MCF 10A (cell line): ENCODE measurements at regions of chr1 and their contacts with region 1.

Region 1: DNA sequence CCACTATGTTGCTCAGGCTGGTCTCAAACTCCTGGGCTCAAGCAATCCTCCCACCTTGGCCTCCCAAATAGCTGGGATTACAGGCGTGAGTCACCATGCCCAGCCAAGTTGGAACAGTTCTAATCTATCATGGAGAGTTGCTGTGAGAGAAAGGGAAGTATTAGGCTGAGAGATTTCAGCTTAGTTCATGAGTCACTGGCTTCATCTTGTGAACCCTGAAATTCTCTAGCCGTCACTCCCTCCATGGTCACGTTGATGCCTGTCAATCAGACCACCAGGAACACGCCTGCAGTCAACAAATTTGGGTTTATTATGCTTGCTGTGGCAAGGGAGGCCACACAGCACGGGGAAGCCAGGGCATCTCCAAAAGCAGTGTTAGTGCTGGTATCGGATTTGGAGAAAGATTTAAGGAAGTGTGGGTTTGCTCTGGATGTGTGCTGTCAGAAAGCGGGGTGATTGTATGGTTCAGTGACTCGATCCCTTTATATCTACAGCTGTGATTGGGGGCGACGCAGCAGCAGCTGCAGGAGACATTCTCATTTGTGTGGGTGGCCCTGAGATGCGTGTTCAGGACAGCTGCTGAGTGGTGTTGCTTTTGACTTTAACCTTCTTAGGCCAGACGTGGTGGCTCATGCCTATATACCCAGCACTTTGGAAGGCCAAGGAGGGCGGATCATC is 18.7 kb downstream of the UQCRHL start:
- DNase-seq: peak; percentile 76
- H3K4me3 Mint-ChIP-seq: no peak overlapping the region
- H3K27ac Mint-ChIP-seq: peak overlapping the region; percentile 76
- H3K4me1 Mint-ChIP-seq: peaks cover 26% of the 10 kb centered on the region
- H3K27me3 Mint-ChIP-seq: no peaks in the 10 kb centered on the region
- CTCF ChIP-seq: no peak

Region 2: DNA sequence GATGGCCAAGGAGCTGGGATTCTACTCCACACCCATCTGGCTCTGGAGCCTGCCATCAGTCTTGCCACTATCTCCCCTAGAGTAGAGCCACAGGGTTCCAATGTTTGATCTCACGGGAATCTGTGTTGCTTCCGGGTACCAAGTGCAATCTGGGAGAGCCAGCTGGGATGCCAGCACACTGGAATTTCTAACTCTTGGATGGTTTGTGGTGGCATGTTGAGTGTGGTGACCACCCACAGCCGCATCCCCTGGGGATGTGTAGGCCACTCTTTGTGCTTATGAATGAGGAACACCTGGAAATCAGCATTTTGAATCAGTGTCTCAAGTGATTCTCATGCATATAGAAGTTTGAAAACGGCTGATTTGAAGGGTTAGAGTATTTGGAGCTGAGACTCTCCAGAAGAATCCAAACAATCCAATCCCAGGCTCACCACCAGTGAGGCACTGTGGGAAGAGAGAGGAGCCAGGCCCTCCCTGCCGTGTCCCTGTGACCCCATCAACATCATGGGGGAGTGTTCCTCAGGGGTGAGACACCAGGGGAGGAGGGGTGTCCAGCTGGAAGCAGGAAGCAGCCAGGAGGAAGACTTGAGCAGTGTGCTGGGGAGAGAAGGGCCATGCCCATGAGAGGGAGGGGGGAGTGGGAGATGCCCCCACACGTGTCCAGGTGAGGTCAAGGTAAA is 16.8 kb before region 1 on chr1:
- CTCF ChIA-PET with region 1: interaction called, 8 read pairs
- POLR2A ChIA-PET with region 1: interaction called, 14 read pairs
- intact Hi-C with region 1: no loop called
- DNase-seq: no peak
- H3K4me3 Mint-ChIP-seq: no peak overlapping the region
- H3K27ac Mint-ChIP-seq: peak overlapping the region; percentile 42
- H3K4me1 Mint-ChIP-seq: no peaks in the 10 kb centered on the region
- H3K27me3 Mint-ChIP-seq: no peaks in the 10 kb centered on the region
- CTCF ChIP-seq: no peak

Region 3: GRCh38 chr1:15949453-15950245 is 160.9 kb after region 1 on chr1:
- CTCF ChIA-PET with region 1: interaction called, 8 read pairs
- POLR2A ChIA-PET with region 1: no interaction called
- intact Hi-C with region 1: loop called (anchors 2 kb)
- DNase-seq: peak; percentile 95
- H3K4me3 Mint-ChIP-seq: peak overlapping the region; percentile 47
- H3K27ac Mint-ChIP-seq: peak overlapping the region; percentile 87
- H3K4me1 Mint-ChIP-seq: peaks cover 59% of the 10 kb centered on the region
- H3K27me3 Mint-ChIP-seq: no peaks in the 10 kb centered on the region
- CTCF ChIP-seq: no peak

Region 4: DNA sequence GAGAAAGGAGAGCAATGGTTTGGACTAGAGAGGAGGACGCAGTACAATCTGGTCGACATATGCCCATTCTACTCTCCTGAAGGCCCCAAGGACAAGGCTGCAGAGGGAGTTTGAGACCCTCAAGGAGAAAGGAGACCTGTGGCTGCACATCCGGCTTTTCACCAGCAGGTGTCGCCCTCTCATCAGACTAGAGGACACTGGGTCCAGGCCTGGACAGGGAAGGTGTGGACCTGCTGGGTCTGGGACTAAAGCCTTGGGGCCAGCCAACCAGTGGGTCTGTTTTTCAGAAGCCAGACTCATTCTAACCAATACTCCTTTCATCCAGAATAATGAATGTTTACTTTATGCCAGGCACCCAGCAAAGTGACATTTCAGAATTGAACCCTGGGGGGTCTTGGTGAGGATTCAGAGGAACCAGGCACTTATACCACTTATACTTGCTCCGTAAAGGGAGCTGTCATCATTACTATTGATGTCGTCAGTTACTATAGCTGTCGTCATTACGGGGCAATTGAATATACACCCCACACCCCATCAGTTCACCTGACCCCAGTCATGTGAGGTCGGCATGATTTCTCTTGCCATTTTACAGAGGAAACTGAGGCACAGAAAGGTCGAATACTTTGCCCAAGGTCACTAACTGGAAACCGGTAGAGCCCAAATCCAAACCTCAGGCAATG is 220.4 kb after region 1 on chr1:
- CTCF ChIA-PET with region 1: interaction called, 23 read pairs
- POLR2A ChIA-PET with region 1: no interaction called
- intact Hi-C with region 1: loop called (anchors 2 kb)
- DNase-seq: peak; percentile 81
- H3K4me3 Mint-ChIP-seq: no peak overlapping the region
- H3K27ac Mint-ChIP-seq: no peak overlapping the region
- H3K4me1 Mint-ChIP-seq: peaks cover 15% of the 10 kb centered on the region
- H3K27me3 Mint-ChIP-seq: no peaks in the 10 kb centered on the region
- CTCF ChIP-seq: peak; percentile 97

Region 5: DNA sequence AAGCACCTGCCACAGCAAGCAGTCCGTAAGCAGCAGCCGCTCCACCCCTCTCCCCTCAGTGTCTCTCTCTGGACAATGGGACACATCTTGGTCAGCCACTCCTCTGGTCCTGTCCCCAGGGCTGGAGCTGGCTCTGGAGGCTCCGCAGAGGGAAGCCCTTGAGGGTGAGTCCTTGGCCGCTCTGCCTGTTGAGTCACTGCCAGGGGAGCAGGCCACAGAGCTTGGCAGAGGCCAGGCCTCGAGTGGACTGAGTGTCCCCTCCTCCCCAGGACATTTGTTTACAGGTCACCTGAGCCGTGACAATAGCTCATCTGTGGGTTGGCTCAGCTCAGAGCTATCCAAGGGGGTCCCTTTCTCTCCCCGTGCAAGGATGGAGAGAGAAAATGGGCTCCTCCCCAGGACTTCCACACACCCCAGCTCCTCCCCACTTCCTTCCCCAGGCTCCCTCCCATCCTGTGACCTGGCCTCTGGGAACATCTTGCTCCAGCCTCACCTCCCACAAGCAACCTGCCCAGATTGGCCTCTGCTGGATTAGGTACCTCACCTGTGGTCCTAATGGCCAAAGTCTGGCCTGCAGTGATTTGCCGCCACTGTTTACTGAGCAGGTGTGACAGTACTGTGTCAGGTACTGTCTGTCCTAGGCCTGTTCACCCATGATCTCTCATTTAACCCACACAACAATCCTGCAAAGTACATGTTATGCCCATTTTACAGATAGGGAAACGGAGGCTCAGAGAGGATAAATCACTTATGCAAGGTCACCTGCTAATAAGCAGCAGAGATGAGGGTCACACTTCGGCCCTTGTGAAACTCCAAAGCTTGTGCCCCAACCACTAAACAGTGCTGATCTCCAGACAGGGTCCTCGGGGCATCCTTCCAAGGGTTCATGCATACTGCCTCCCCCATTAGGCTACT is 279.9 kb after region 1 on chr1:
- CTCF ChIA-PET with region 1: no interaction called
- POLR2A ChIA-PET with region 1: no interaction called
- intact Hi-C with region 1: no loop called
- DNase-seq: no peak
- H3K4me3 Mint-ChIP-seq: no peak overlapping the region
- H3K27ac Mint-ChIP-seq: no peak overlapping the region
- H3K4me1 Mint-ChIP-seq: peaks cover 6% of the 10 kb centered on the region
- H3K27me3 Mint-ChIP-seq: peaks cover 16% of the 10 kb centered on the region
- CTCF ChIP-seq: no peak